Natural killer cell (primary cell): ENCODE measurements at regions of chr1 and their contacts with region 1.

Region 1: GRCh38 chr1:162430583-162430982 is 18.6 kb upstream of the SH2D1B start:
- DNase-seq: no peak
- ATAC-seq: no peak
- H3K4me3 ChIP-seq: no peak overlapping the region
- H3K4me3 Mint-ChIP-seq: no peak overlapping the region
- H3K27ac ChIP-seq: no peak overlapping the region
- H3K27ac Mint-ChIP-seq: no peak overlapping the region
- H3K4me1 ChIP-seq: no peaks in the 10 kb centered on the region
- H3K4me1 Mint-ChIP-seq: no peaks in the 10 kb centered on the region
- H3K27me3 ChIP-seq: no peaks in the 10 kb centered on the region
- H3K27me3 Mint-ChIP-seq: no peaks in the 10 kb centered on the region
- CTCF ChIP-seq: no peak

Region 2: DNA sequence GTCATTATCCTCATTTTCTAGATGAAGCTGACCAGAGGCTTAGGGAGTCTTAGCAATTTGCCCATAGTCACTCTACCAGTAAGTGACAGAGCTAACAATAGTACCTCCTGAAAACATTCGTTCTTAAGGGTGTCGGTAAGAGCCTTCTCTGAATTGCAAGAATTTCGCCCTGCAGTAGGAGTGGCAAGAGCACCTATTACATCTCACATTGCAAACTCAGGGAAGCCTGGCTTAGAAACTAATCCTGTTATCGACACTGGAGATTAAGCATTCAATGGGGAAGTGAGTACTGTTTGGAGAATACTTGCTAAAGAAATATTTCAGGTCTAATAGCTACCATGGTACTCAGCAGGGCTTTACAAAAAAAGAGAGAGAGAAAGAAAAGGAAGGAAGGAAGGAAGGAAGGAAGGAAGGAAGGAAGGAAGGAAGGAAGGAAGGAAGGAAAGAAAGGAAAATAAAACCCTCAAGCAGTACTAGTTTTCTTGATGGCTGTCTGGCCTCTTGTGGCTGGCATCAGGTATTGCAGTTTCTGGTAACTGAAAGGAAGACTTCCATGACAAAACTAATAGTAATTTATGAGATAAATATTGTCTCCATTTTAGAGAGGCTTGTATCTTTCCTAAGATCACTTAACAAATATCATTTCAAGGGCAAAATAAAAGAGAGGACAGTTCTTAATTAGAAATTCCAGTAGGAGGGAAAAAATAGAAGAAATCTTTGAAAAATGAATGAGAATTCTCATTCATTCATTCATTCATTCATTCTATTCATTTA is 38.6 kb before region 1 on chr1:
- intact Hi-C with region 1: loop called (anchors 10 kb)
- DNase-seq: peak in 1 of 2 donors; percentile 45
- ATAC-seq: peak in 2 of 3 donors; percentile 62 to 77
- H3K4me3 ChIP-seq: no peak overlapping the region
- H3K4me3 Mint-ChIP-seq: no peak overlapping the region
- H3K27ac ChIP-seq: no peak overlapping the region
- H3K27ac Mint-ChIP-seq: peak overlapping the region; percentile 83 to 89
- H3K4me1 ChIP-seq: peaks cover 30% of the 10 kb centered on the region
- H3K4me1 Mint-ChIP-seq: peaks cover 60 to 67% of the 10 kb centered on the region in 2 donors
- H3K27me3 ChIP-seq: no peaks in the 10 kb centered on the region
- H3K27me3 Mint-ChIP-seq: no peaks in the 10 kb centered on the region
- CTCF ChIP-seq: peak; percentile 73